HEK293 (cell line): ENCODE measurements at regions of chr20 and their contacts with region 1.

Region 1: DNA sequence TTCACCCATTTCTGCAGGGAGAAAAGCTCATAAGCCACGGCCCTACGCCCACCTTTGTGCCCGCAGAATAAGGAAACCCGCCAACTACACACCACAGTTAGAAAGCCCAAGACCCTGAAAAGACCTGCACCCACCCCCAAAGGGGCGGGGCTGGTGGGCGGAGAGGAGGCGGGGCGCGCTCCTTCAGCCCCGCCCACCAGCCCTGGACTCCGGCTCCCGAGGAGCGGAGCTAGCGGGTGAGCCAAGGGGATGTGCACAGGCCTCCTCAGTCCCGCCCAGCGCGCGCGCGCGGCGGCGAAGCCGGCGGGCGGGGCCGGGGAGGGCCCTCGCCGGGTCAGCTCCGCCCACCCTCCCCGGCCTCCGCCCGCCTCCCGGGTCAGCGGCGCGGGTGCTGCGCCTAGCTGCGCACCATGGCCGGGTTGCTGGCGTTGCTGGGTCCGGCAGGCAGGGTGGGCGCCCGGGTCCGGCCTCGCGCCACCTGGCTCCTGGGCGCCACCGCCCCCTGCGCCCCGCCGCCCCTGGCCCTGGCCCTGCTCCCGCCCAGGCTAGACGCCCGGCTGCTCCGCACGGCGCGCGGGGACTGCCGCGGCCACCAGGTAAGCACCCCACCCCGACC is at the start of gene FAM210B:
- H3K4me3 ChIP-seq: peak within 1 kb of the TSS; percentile 65
- H3K27ac ChIP-seq: peak within 1 kb of the TSS; percentile 66
- H3K4me1 ChIP-seq: no peaks in the 10 kb centered on the region
- CTCF ChIP-seq: no peak

Region 2: DNA sequence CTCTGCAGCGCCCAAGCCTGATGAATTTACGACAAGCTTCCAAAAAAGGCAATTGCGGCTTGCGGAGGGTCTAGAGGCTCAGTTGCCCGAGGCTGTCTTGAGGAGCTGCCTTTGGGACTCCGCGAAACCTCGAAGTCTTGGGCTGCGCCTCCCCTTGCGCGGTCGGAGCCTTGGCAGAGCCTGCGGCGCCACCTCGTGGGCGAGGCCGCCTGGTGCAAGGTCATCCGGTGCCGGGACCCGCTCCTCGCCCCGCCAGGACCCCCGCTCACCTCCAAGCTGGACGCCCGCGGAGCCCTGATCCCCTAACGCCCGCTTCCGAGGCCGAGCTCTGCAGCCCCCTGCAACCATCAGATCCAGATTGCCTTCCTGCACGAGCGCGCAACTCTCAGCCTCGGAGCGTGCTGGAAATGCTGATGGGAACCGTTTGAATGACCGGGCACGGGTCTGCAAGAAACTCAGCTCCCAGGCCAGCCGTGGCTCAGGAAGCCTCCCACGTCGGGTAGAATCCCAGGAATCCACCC is 14.8 kb before region 1 on chr20:
- CTCF ChIA-PET with region 1: interaction called, 15 read pairs
- POLR2A ChIA-PET with region 1: no interaction called
- H3K4me3 ChIP-seq: no peak overlapping the region
- H3K27ac ChIP-seq: no peak overlapping the region
- H3K4me1 ChIP-seq: peaks cover 6% of the 10 kb centered on the region; the same call in 1 of the 2 replicates
- CTCF ChIP-seq: peak; percentile 55

Region 3: DNA sequence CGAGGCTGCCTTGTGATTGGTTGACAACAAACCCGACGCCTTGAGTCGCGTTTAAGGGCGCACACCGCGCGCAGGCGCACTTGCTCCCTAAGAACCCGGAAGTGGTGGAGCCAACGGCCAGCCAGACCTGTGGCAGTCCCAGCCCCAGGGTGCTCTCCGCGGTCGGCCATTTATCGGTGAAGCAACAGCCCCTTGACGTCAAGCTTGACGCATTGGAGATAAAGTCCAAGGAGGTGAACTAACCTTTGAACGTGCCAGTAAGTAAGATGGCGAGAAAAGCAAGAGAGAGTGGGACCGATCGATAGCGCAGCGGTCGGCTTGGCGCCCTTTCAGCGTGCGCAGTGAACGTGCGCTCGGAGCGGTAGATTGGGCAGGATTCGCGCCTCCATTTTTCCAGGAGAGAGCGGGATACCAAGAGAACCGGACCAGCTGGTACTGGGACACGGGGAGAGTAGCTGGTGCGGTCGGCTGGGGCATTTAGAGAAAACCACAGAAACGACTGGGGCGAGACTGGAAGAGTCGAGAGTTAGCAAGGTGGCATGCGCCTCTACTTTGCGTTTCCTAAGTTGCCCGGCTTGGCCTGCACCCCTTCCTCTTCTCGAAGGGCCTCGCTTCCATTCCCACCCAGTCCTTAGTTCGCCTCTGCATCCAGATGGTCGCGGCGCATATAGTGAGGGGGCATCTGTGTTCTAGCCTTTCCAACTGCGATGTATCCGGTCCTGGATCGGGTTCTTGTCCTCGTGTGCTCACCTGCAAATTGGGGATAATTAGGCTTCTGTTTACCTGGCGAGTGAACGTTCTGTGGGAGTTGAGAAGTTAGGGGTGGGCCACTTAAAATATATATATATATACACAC is 33.8 kb after region 1 on chr20 and contains the start of gene CSTF1:
- CTCF ChIA-PET with region 1: no interaction called
- POLR2A ChIA-PET with region 1: interaction called, 31 read pairs
- H3K4me3 ChIP-seq: peak within 1 kb of the TSS; percentile 88
- H3K27ac ChIP-seq: peak within 1 kb of the TSS; percentile 83
- H3K4me1 ChIP-seq: peaks cover 4% of the 10 kb centered on the region; the same call in 1 of the 2 replicates
- CTCF ChIP-seq: no peak

Region 4: DNA sequence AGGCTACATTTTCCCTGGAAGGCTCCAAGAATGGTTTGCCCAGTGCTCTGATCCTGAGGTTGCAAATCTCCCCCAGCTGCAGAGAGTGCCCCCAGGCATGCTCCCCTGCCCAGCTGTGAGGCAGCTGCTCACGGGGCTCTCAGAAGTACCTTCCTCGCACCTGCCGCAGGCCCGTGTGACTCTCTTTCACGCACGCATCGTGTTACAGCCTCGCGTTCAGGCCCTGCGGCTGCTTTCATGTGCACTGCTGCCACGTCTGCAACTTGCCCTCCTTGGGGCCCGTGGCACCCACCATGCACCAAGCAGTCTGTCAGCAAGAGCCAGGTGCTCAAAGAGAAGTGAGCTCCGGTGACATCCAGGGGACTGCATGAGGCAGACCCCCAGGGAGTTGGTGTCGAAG is 942.3 kb after region 1 on chr20:
- CTCF ChIA-PET with region 1: no interaction called
- POLR2A ChIA-PET with region 1: no interaction called
- H3K4me3 ChIP-seq: no peak overlapping the region
- H3K27ac ChIP-seq: no peak overlapping the region
- H3K4me1 ChIP-seq: no peaks in the 10 kb centered on the region
- CTCF ChIP-seq: no peak